PC-9 (cell line): ENCODE measurements at regions of chr12 and their contacts with region 1.

Region 1: GRCh38 chr12:6423267-6424007 is 21.3 kb upstream of the CD27 start:
- DNase-seq: peak; percentile 81 to 82
- H3K4me3 ChIP-seq: no peak overlapping the region
- H3K27ac ChIP-seq: no peak overlapping the region
- H3K4me1 ChIP-seq: 0 out of 2 replicates have a peak, but pooled peaks cover 3% of the 10 kb centered on the region
- H3K27me3 ChIP-seq: no peaks in the 10 kb centered on the region
- CTCF ChIP-seq: peak; percentile 95

Region 2: GRCh38 chr12:6493497-6494257 is 70.2 kb after region 1 on chr12 and contains the start of gene NCAPD2:
- CTCF ChIA-PET with region 1: no interaction called
- POLR2A ChIA-PET with region 1: no interaction called
- intact Hi-C with region 1: loop called (anchors 2 kb)
- DNase-seq: peak; percentile 93 to 98
- H3K4me3 ChIP-seq: peak within 1 kb of the TSS; percentile 87
- H3K27ac ChIP-seq: peak within 1 kb of the TSS; percentile 85
- H3K4me1 ChIP-seq: peaks cover 24% of the 10 kb centered on the region
- H3K27me3 ChIP-seq: no peaks in the 10 kb centered on the region
- CTCF ChIP-seq: peak; percentile 46; the same call in 1 of the 2 replicates
- total RNA-seq, gene NCAPD2: 220 and 266 TPM in 2 replicates

Region 3: GRCh38 chr12:6540181-6540877 is 116.9 kb after region 1 on chr12:
- CTCF ChIA-PET with region 1: no interaction called
- POLR2A ChIA-PET with region 1: no interaction called
- intact Hi-C with region 1: loop called (anchors 1 kb)
- DNase-seq: peak; percentile 87 to 98
- H3K4me3 ChIP-seq: peak overlapping the region; percentile 3; the same call in 1 of the 2 replicates
- H3K27ac ChIP-seq: peak overlapping the region; percentile 52
- H3K4me1 ChIP-seq: peaks cover 30% of the 10 kb centered on the region
- H3K27me3 ChIP-seq: no peaks in the 10 kb centered on the region
- CTCF ChIP-seq: no peak

Region 4: GRCh38 chr12:6554168-6555017 is 131.0 kb after region 1 on chr12:
- CTCF ChIA-PET with region 1: no interaction called
- POLR2A ChIA-PET with region 1: no interaction called
- intact Hi-C with region 1: loop called (anchors 5 kb)
- DNase-seq: peak in 1 of 2 experiments; percentile 65
- H3K4me3 ChIP-seq: no peak overlapping the region
- H3K27ac ChIP-seq: no peak overlapping the region
- H3K4me1 ChIP-seq: no peaks in the 10 kb centered on the region
- H3K27me3 ChIP-seq: no peaks in the 10 kb centered on the region
- CTCF ChIP-seq: peak; percentile 62

Region 5: DNA sequence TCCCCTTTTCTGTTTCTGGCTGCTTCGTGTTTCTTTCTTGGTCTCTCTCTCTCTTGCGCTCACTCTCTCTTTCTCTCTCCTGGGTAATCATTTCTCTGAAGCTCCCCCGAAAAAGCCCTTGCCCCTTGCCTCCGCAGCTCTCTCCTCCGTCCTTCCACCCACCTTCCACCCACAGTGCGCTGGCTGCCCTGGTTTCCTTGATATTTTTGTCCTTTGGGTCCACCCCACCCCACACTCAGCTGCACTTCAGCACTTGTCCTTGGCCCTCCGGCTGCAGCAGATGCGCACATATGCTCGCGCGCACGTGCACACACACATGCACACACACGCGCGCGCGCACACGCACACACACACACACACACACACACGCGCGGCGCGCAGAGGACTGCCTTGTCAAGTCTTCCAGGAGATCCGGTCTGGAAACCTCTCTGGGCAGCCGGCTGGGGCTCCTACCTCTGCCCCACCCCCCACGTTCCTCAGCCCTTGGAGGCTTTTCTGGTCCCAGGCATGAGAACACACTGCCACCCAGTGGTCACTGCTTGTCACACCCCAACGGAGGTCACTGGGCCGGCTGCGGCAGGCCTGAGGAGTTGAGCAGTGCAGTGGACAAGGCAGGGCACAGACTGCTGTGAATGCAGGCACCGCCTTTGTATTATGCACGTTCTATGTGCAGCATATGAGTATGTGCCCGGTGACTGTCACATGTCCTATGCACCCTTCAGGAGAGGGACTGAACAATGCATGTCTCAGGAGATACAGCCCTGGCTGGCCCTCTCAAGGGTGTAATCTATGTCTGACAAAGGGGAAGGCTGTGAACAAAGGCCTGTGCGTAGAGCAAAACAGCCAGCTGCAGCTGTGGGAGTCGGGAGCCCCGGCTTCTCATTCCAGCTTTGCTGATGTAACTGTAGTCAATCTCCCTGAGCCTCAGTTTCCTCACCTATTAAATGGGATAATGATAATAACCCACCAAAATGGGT is 355.4 kb after region 1 on chr12:
- CTCF ChIA-PET with region 1: no interaction called
- POLR2A ChIA-PET with region 1: no interaction called
- intact Hi-C with region 1: loop called (anchors 1 kb)
- DNase-seq: peak; percentile 86 to 98
- H3K4me3 ChIP-seq: peak overlapping the region; percentile 47; the same call in 1 of the 2 replicates
- H3K27ac ChIP-seq: no peak overlapping the region
- H3K4me1 ChIP-seq: no peaks in the 10 kb centered on the region
- H3K27me3 ChIP-seq: no peaks in the 10 kb centered on the region
- CTCF ChIP-seq: peak; percentile 98

Region 6: DNA sequence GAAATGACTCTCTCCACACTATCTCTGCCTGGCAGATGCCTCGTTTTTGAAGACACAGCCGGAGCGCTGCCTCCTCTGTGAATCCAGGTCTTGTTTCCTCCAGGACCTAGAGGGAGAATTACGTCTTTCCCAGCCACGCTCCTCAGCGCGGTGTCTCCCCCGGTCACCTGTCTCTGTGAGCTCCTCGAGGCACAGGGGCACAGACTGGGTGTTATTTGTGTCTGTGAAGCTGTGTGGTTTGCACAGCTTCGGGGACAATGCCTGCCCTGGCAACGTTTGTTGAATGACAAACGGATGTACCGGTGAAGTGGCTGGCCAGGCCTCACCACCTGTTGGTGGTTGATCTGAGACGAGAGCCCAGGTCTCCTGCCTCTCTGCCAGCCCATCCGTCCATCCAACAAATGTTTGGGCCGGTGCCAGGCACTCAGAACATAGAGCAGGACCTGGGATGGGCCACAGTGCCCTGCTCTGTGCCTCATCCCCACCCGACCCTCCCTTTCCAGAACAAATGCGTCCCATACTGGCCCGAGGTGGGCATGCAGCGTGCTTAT is 533.8 kb after region 1 on chr12:
- CTCF ChIA-PET with region 1: no interaction called
- POLR2A ChIA-PET with region 1: interaction called, 10 read pairs
- intact Hi-C with region 1: no loop called
- DNase-seq: no peak
- H3K4me3 ChIP-seq: no peak overlapping the region
- H3K27ac ChIP-seq: no peak overlapping the region
- H3K4me1 ChIP-seq: peaks cover 24% of the 10 kb centered on the region
- H3K27me3 ChIP-seq: no peaks in the 10 kb centered on the region
- CTCF ChIP-seq: no peak